ENCODE measurements at regions of chr20 and their contacts with region 1.

Region 1: GRCh38 chr20:23606652-23607049 is 934 bp upstream of the CST9 start:
- DNase-seq: peak; percentile 56 to 69 (median 65)
- H3K4me3 ChIP-seq: no peak overlapping the region
- H3K4me3 Mint-ChIP-seq: peak overlapping the region in 1 of 2 donors; percentile 42
- H3K27ac ChIP-seq: no peak overlapping the region
- H3K27ac Mint-ChIP-seq: peak overlapping the region in 1 of 7 donors; percentile 49
- H3K4me1 ChIP-seq: peaks cover 22 to 24% of the 10 kb centered on the region in 2 donors
- H3K4me1 Mint-ChIP-seq: peaks cover 29% of the 10 kb centered on the region
- H3K27me3 ChIP-seq: no peaks in the 10 kb centered on the region
- H3K27me3 Mint-ChIP-seq: peaks cover 6 to 15% (median 10%) of the 10 kb centered on the region in 3 donors
- CTCF ChIP-seq: peak; percentile 93

Region 2: GRCh38 chr20:23366384-23366783 is 240.3 kb before region 1 on chr20:
- intact Hi-C with region 1: loop called in 1 of 2 experiments (anchors 5 kb)
- DNase-seq: peak; percentile 58 to 89 (median 85)
- H3K4me3 ChIP-seq: peak overlapping the region in 1 of 3 experiments; percentile 52
- H3K4me3 Mint-ChIP-seq: peak overlapping the region in 1 of 2 donors; percentile 75
- H3K27ac ChIP-seq: peak overlapping the region; percentile 63 to 65
- H3K27ac Mint-ChIP-seq: peak overlapping the region; percentile 90 to 96 (median 95)
- H3K4me1 ChIP-seq: peaks cover 38 to 52% of the 10 kb centered on the region in 2 donors
- H3K4me1 Mint-ChIP-seq: peaks cover 50% of the 10 kb centered on the region
- H3K27me3 ChIP-seq: no peaks in the 10 kb centered on the region
- H3K27me3 Mint-ChIP-seq: peaks cover 0 to 3% (median 3%) of the 10 kb centered on the region in 3 donors
- CTCF ChIP-seq: no peak

Region 3: GRCh38 chr20:23420943-23421931 is 185.4 kb before region 1 on chr20 and contains the start of gene NAPB:
- intact Hi-C with region 1: no loop called
- DNase-seq: peak; percentile 81 to 90 (median 85)
- H3K4me3 ChIP-seq: peak within 1 kb of the TSS; percentile 87 to 99 (median 94)
- H3K4me3 Mint-ChIP-seq: peak within 1 kb of the TSS; percentile 81 to 91
- H3K27ac ChIP-seq: peak within 1 kb of the TSS; percentile 75 to 84
- H3K27ac Mint-ChIP-seq: peak within 1 kb of the TSS; percentile 62 to 93 (median 86)
- H3K4me1 ChIP-seq: peaks cover 12% of the 10 kb centered on the region in 2 donors
- H3K4me1 Mint-ChIP-seq: peaks cover 22% of the 10 kb centered on the region
- H3K27me3 ChIP-seq: no peaks in the 10 kb centered on the region
- H3K27me3 Mint-ChIP-seq: no peaks in the 10 kb centered on the region
- CTCF ChIP-seq: peak; percentile 58
- polyA plus RNA-seq, gene NAPB: 2.4 to 6.3 (median 2.6) TPM

Region 4: GRCh38 chr20:23441850-23442313 is 164.8 kb before region 1 on chr20:
- intact Hi-C with region 1: loop called (anchors 1 to 2 kb)
- DNase-seq: peak; percentile 46 to 76 (median 67)
- H3K4me3 ChIP-seq: no peak overlapping the region
- H3K4me3 Mint-ChIP-seq: no peak overlapping the region
- H3K27ac ChIP-seq: no peak overlapping the region
- H3K27ac Mint-ChIP-seq: no peak overlapping the region
- H3K4me1 ChIP-seq: no peaks in the 10 kb centered on the region
- H3K4me1 Mint-ChIP-seq: no peaks in the 10 kb centered on the region
- H3K27me3 ChIP-seq: no peaks in the 10 kb centered on the region
- H3K27me3 Mint-ChIP-seq: peaks cover 2 to 10% (median 8%) of the 10 kb centered on the region in 3 donors
- CTCF ChIP-seq: peak; percentile 91

Region 5: GRCh38 chr20:23541330-23541729 is 65.3 kb before region 1 on chr20:
- intact Hi-C with region 1: loop called in 1 of 2 experiments (anchors 2 kb)
- DNase-seq: peak; percentile 8 to 57 (median 15)
- H3K4me3 ChIP-seq: no peak overlapping the region
- H3K4me3 Mint-ChIP-seq: no peak overlapping the region
- H3K27ac ChIP-seq: no peak overlapping the region
- H3K27ac Mint-ChIP-seq: peak overlapping the region in 2 of 7 donors; percentile 15 to 27
- H3K4me1 ChIP-seq: peaks cover 13% of the 10 kb centered on the region in 2 donors
- H3K4me1 Mint-ChIP-seq: peaks cover 23% of the 10 kb centered on the region
- H3K27me3 ChIP-seq: no peaks in the 10 kb centered on the region
- H3K27me3 Mint-ChIP-seq: peaks cover 0 to 5% (median 0%) of the 10 kb centered on the region in 3 donors
- CTCF ChIP-seq: no peak

Measured in CD14-positive monocyte (primary cell).